Mucosa of descending colon (tissue), 3 donors: ENCODE measurements at regions of chr3 and their contacts with region 1.

Region 1: DNA sequence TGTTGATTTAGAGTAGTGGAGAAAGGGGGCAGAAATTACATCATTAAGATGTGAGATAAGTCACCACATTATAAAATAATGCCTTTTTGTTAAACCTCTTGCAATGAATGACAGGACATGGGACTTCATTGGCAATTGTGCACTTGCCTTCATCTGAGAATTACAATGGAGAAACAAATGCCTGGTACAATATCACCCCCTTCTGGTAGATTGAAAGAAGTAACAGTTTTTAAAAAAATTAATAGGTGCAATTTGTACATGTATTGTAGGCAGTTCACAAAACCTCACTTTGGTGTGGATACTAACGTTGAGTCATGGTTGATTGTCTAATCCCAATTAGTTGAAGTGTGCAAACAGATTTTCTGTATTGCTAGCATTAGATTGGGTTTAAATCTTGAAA is 4.6 kb upstream of the P2RY14 start:
- DNase-seq: no peak
- ATAC-seq: peak; percentile 68
- H3K4me3 ChIP-seq: no peak overlapping the region
- H3K4me1 ChIP-seq: peaks cover 12% of the 10 kb centered on the region
- CTCF ChIP-seq: peak; percentile 19

Region 2: DNA sequence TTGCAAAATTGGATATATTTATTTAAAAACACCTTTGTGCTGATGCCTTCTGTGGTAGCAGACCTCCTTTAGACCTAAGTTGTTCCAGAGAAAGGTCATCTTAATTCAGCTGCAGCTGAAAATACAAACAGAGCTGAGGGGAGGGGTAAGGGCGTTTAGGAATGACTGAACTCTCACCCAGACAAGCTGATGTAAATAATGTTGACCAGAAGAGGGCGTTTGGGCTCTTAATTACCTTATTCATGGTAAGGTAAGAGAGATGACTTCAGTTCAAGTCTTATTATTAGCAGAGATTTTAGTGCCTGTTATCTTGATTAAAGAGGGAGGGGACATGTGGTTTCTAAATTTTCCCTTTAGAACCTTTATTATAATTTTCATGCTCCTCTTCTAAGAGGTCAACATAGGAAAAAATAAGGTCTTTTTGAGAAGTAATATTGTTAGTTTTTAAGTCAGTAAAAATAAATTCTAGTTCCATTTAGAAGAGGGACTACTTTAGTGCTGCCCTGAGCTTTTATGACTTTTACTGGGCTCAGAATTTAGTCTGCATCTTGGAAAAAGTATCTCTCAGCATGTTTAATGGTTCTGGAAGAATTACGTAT is 126.2 kb before region 1 on chr3:
- intact Hi-C with region 1: no loop called
- DNase-seq: peak in 1 of 3 donors; percentile 49
- ATAC-seq: peak; percentile 62
- H3K4me3 ChIP-seq: no peak overlapping the region
- H3K4me1 ChIP-seq: no peaks in the 10 kb centered on the region
- CTCF ChIP-seq: no peak

Region 3: GRCh38 chr3:151168269-151169094 is 114.4 kb before region 1 on chr3:
- intact Hi-C with region 1: loop called (anchors 2 to 5 kb)
- DNase-seq: peak; percentile 84 to 94 (median 88)
- ATAC-seq: peak; percentile 85
- H3K4me3 ChIP-seq: no peak overlapping the region
- H3K4me1 ChIP-seq: peaks cover 8% of the 10 kb centered on the region
- CTCF ChIP-seq: peak; percentile 61

Region 4: DNA sequence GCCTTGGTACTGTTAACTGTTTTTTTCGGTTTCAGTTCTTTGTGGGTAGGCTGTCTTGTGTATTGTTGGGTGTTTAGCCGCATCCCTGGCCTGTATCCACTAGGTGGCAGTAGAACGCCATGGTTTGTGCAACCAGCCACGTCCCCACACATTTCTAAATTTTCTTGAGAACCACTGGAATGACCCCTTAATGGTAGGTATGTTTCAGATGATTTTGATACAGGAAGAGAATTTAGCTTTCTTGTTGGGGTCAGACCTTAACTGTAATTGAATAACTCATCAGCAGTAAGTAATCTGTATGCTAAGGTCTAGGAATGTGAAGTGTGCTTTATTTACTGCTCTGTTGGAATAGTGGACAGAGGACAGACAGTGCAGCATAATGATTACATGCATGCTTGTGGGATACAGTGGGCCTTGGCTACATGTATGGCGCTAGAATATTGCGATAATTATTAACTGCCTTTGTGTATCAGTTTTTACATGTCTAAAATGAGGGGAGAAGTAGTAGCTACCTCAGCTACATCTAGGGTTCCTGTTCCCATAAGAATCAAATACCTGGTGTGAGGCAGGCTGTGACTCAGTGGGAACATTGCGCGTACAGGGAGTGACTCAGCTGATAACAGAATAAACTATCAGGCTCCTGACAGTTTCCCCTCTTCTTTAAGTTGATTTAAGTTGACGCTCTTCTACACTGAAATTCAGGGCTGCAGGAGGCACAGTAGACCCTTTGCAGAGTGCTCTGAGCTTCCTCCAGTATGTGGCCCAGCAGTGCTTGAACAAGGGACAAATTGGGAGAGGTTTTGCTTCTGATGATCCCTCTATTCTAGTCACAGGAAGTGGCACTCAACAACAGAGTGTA is 54.9 kb before region 1 on chr3:
- intact Hi-C with region 1: loop called (anchors 2 to 5 kb)
- DNase-seq: peak in 2 of 3 donors; percentile 73 to 85
- ATAC-seq: peak; percentile 94
- H3K4me3 ChIP-seq: no peak overlapping the region
- H3K4me1 ChIP-seq: peaks cover 10% of the 10 kb centered on the region
- CTCF ChIP-seq: peak; percentile 76

Region 5: DNA sequence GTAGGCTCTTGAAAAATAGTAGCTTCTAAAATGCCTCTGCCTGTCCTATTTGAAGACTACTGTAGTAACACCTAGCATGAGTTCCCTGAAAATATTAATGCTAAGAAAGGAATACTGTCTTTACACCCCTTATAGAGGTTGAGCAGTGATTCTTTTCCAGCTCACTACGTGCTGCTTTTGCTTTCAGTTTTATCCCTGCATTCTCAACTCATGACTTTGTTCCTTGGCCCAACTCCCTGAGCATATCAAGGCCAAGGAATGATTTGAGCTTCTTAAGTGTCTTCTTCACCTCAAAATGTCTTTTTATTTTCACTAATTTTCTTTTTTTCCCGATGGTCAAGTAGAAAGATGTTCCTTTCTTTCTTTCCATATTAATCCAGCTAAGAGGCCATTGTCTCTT is 62.9 kb after region 1 on chr3:
- intact Hi-C with region 1: no loop called
- DNase-seq: peak in 1 of 3 donors; percentile 41
- ATAC-seq: peak; percentile 49
- H3K4me3 ChIP-seq: no peak overlapping the region
- H3K4me1 ChIP-seq: no peaks in the 10 kb centered on the region
- CTCF ChIP-seq: no peak